IMR-90 (cell line): ENCODE measurements at regions of chr4 and their contacts with region 1.

Region 1: DNA sequence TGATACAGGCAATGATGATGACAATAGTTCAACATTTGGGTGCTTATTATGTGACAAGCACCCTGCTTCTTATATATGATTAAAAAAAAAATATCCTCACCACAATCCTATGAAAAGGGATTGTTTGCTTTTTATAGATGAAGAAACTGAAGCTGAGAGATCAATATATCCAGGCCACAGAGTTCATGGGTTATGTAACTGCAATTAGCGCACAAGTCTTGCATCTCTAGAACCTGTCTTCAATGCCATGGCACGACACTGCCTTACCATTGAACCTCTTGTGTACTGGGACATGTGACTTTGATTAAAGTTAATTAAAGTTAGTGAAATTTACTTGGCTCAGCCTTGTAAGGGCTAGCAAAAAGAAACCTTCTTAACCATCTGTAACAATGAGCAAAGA is 599.7 kb downstream of the ADGRL3 start:
- DNase-seq: no peak
- ATAC-seq: no peak
- H3K4me3 ChIP-seq: no peak overlapping the region
- H3K27ac ChIP-seq: no peak overlapping the region
- H3K4me1 ChIP-seq: no peaks in the 10 kb centered on the region
- H3K27me3 ChIP-seq: no peaks in the 10 kb centered on the region
- CTCF ChIP-seq: no peak
- POLR2A ChIP-seq: no peak
- RAD21 ChIP-seq: no peak

Region 2: GRCh38 chr4:60463857-60464502 is 1335.8 kb before region 1 on chr4:
- CTCF ChIA-PET with region 1: interaction called, 10 read pairs
- POLR2A ChIA-PET with region 1: no interaction called
- dilution Hi-C with region 1: no loop called
- in situ Hi-C with region 1: no loop called
- intact Hi-C with region 1: no loop called
- DNase-seq: no peak
- ATAC-seq: peak; percentile 71; the same call in 1 of the 2 replicates
- H3K4me3 ChIP-seq: no peak overlapping the region
- H3K27ac ChIP-seq: no peak overlapping the region
- H3K4me1 ChIP-seq: no peaks in the 10 kb centered on the region
- H3K27me3 ChIP-seq: no peaks in the 10 kb centered on the region
- CTCF ChIP-seq: peak; percentile 37
- POLR2A ChIP-seq: no peak
- RAD21 ChIP-seq: peak; percentile 18; the same call in 1 of the 2 replicates

Region 3: GRCh38 chr4:62328526-62328925 is 528.7 kb after region 1 on chr4:
- CTCF ChIA-PET with region 1: no interaction called
- POLR2A ChIA-PET with region 1: no interaction called
- dilution Hi-C with region 1: no loop called
- in situ Hi-C with region 1: no loop called
- intact Hi-C with region 1: no loop called
- DNase-seq: no peak
- ATAC-seq: no peak
- H3K4me3 ChIP-seq: no peak overlapping the region
- H3K27ac ChIP-seq: no peak overlapping the region
- H3K4me1 ChIP-seq: no peaks in the 10 kb centered on the region
- H3K27me3 ChIP-seq: no peaks in the 10 kb centered on the region
- CTCF ChIP-seq: no peak
- POLR2A ChIP-seq: no peak
- RAD21 ChIP-seq: no peak